ENCODE measurements at regions of chrX and their contacts with region 1.

Region 1: GRCh38 chrX:1453951-1454785 is 1.5 kb upstream of the ASMTL start:
- DNase-seq: peak; percentile 97
- H3K4me3 ChIP-seq: peak overlapping the region; percentile 24 to 98 (median 63)
- H3K27ac ChIP-seq: peak overlapping the region; percentile 59 to 97 (median 84)
- H3K4me1 ChIP-seq: peaks cover 4 to 43% (median 19%) of the 10 kb centered on the region in 6 donors
- H3K27me3 ChIP-seq: no peaks in the 10 kb centered on the region
- CTCF ChIP-seq: peak; percentile 96 to 100 (median 98)
- POLR2A ChIP-seq: no peak

Region 2: GRCh38 chrX:843306-843705 is 610.9 kb before region 1 on chrX:
- intact Hi-C with region 1: no loop called
- DNase-seq: no peak
- H3K4me3 ChIP-seq: no peak overlapping the region
- H3K27ac ChIP-seq: no peak overlapping the region
- H3K4me1 ChIP-seq: no peaks in the 10 kb centered on the region
- H3K27me3 ChIP-seq: no peaks in the 10 kb centered on the region
- CTCF ChIP-seq: no peak
- POLR2A ChIP-seq: no peak

Region 3: GRCh38 chrX:1316527-1316926 is 137.6 kb before region 1 on chrX:
- intact Hi-C with region 1: no loop called
- DNase-seq: peak; percentile 90
- H3K4me3 ChIP-seq: peak overlapping the region in 1 of 8 donors; percentile 39
- H3K27ac ChIP-seq: peak overlapping the region in 7 of 8 donors; percentile 27 to 82 (median 74)
- H3K4me1 ChIP-seq: peaks cover 0 to 19% (median 3%) of the 10 kb centered on the region in 6 donors
- H3K27me3 ChIP-seq: peaks cover 0 to 19% (median 0%) of the 10 kb centered on the region in 7 donors
- CTCF ChIP-seq: no peak
- POLR2A ChIP-seq: no peak

Region 4: DNA sequence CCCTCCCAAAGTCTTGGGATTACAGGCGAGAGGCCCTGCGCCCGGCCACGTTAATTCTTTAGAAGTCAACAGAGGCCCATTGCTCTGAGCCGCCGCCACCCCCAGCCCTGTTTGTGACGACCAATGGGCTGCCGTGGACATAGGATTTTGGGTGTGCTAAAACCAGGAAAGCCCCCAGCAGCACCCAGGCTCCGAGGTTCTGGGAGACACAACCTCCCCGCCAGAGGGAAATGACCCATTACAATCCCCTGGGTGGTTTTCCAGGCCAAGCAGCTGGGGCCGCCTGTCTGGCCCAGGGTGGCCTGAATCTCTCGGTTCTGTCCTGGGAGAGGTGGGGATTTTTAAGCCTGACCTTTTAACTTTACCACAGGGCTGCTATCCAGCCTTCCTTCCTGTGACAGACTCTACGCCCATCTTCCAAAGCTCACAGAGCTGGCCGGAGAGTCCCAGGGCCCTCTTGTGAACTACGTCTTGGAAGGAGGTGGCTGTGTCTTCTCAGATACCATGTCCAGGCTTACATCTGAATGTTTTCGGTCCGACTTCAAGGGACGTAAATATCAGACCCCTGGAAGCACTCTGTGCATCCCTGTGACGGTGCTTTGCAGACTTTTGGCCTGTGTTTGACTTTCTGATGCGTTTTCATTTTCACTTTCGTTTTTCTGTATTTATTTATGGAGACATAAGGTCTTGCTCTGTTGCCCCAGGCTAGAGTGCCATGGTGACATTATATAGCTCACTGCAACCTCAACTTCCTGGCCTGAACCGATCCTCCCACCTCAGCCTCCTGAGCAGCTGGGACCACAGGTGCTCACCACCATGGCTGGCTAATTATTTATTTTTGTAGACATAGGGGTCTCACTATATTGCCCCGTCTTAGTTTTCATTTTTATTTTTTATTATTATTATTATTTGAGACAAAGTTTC is 46.8 kb after region 1 on chrX:
- intact Hi-C with region 1: no loop called
- DNase-seq: peak; percentile 79
- H3K4me3 ChIP-seq: peak overlapping the region in 3 of 8 donors; percentile 16 to 49 (median 26)
- H3K27ac ChIP-seq: peak overlapping the region; percentile 62 to 86 (median 84)
- H3K4me1 ChIP-seq: peaks cover 24 to 79% (median 53%) of the 10 kb centered on the region in 6 donors
- H3K27me3 ChIP-seq: no peaks in the 10 kb centered on the region
- CTCF ChIP-seq: no peak
- POLR2A ChIP-seq: no peak

Region 5: DNA sequence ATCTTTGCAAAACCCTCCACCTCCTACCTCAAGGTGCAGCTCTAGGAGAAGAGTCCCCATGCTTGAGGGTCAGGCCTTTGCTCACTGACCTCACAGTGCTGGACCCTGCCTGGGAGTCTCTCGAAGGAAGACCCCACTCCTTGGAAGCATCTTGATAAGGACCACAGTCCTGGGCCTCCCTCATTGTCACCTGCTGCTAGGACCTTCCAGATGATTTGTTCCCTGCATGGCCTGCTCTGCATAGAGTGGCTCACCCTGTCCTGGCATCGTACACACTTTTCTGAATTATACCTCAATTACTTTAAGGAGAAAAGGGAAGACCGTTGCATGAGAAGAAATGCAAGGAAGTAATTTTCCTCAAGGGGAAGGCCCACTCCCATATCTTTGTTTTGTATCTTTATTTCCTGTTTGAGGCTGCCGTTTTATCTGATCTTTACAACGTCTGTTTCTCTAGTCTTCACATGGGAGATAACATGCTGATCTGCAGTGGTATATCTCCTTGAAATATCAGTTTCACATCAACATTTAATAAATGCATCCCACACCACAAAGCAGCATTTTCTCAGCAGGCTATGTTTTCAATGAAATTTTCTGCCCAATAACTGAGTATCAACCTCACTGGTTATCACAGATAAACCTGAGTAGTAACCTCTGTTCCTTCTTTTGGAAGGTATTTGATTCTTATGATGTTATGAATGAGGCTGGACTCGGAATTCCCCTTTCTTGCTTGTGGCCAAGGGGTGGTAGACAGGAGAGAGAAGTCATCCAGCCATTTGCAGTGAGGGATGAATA is 122.2 kb after region 1 on chrX:
- intact Hi-C with region 1: loop called (anchors 10 kb)
- DNase-seq: no peak
- H3K4me3 ChIP-seq: no peak overlapping the region
- H3K27ac ChIP-seq: peak overlapping the region in 2 of 8 donors; percentile 7 to 55
- H3K4me1 ChIP-seq: peaks cover 0 to 15% (median 0%) of the 10 kb centered on the region in 6 donors
- H3K27me3 ChIP-seq: no peaks in the 10 kb centered on the region
- CTCF ChIP-seq: no peak
- POLR2A ChIP-seq: no peak

Region 6: GRCh38 chrX:1629244-1629643 is 175.1 kb after region 1 on chrX:
- intact Hi-C with region 1: no loop called
- DNase-seq: no peak
- H3K4me3 ChIP-seq: no peak overlapping the region
- H3K27ac ChIP-seq: no peak overlapping the region
- H3K4me1 ChIP-seq: no peaks in the 10 kb centered on the region
- H3K27me3 ChIP-seq: peaks cover 0 to under 1% (median 0%) of the 10 kb centered on the region in 7 donors
- CTCF ChIP-seq: no peak
- POLR2A ChIP-seq: no peak